Gastrocnemius medialis (tissue), 4 donors: ENCODE measurements at regions of chr10 and their contacts with region 1.

Region 1: GRCh38 chr10:10891124-10892082 is 126.3 kb upstream of the CELF2 start:
- DNase-seq: peak; percentile 57 to 59
- ATAC-seq: peak; percentile 98 to 99
- H3K4me3 ChIP-seq: no peak overlapping the region
- H3K27ac ChIP-seq: peak overlapping the region; percentile 40 to 71 (median 70)
- H3K4me1 ChIP-seq: peaks cover 12 to 15% of the 10 kb centered on the region in 2 donors
- H3K27me3 ChIP-seq: no peaks in the 10 kb centered on the region
- CTCF ChIP-seq: no peak
- POLR2A ChIP-seq: peak in 1 of 2 donors; percentile 24

Region 2: DNA sequence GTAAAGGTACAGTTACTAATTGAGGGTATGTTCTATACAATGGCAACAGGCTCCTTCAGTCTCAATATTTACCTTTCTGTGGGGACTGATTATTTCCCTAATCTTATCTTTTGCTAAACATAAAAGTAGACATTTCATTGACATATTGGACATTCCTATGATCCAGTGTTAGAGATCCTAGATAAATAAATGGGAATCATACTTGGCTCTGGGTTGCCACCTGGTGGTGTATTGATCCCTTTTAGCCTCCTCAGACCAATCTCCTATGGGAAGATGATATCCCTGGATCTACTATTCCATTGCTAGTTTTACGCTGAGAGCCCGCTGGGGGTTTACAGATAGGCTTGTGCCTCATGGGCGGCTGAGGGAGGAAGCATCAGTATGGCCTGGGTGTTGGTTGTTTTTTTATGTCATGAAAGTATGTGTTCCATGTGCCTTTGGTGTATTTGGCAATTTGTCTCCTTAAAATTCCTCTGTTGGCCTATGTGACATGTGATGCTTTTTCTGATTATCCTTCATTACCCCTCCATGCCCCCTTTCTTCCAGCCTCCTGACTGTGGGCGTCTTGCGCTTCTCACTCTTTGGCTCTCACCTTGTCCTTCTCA is 145.1 kb after region 1 on chr10:
- in situ Hi-C with region 1: no loop called
- intact Hi-C with region 1: loop called (anchors 5 kb)
- DNase-seq: no peak
- ATAC-seq: peak; percentile 46 to 60
- H3K4me3 ChIP-seq: no peak overlapping the region
- H3K27ac ChIP-seq: no peak overlapping the region
- H3K4me1 ChIP-seq: peaks cover 14 to 18% of the 10 kb centered on the region in 2 donors
- H3K27me3 ChIP-seq: no peaks in the 10 kb centered on the region
- CTCF ChIP-seq: peak; percentile 16 to 63 (median 53)
- POLR2A ChIP-seq: no peak